Uterus (tissue), 4 donors: ENCODE measurements at regions of chr5 and their contacts with region 1.

Region 1: GRCh38 chr5:157816682-157817386 is 42.1 kb downstream of the CLINT1 start:
- DNase-seq: no peak
- H3K4me3 ChIP-seq: no peak overlapping the region
- H3K27ac ChIP-seq: peak overlapping the region in 1 of 2 donors; percentile 12
- H3K4me1 ChIP-seq: peaks cover 0 to 5% of the 10 kb centered on the region in 2 donors
- H3K27me3 ChIP-seq: no peaks in the 10 kb centered on the region
- CTCF ChIP-seq: peak; percentile 32 to 66 (median 52)
- POLR2A ChIP-seq: no peak

Region 2: DNA sequence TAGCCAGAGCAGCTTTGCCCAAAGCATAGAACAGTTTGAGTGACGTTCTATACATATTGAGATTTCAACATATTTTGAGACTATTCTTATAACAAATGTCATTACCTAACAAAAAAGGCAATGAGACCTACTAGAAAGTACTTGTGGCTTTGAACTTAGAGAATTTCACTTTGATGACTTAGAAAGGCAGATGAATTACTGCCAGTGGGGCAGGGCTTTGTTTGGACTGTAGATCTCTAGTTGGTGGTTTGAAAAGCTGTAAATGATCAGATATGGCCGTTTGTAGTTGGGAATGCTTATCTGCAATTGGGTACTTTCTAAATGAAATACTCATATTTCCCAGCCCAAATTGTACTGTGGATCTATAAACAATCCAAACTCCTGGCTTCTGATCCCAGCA is 192.7 kb before region 1 on chr5:
- intact Hi-C with region 1: no loop called
- DNase-seq: no peak
- H3K4me3 ChIP-seq: no peak overlapping the region
- H3K27ac ChIP-seq: no peak overlapping the region
- H3K4me1 ChIP-seq: no peaks in the 10 kb centered on the region
- H3K27me3 ChIP-seq: no peaks in the 10 kb centered on the region
- CTCF ChIP-seq: no peak
- POLR2A ChIP-seq: no peak

Region 3: GRCh38 chr5:157750320-157750719 is 66.5 kb before region 1 on chr5:
- intact Hi-C with region 1: no loop called
- DNase-seq: peak; percentile 48 to 53
- H3K4me3 ChIP-seq: no peak overlapping the region
- H3K27ac ChIP-seq: peak overlapping the region; percentile 74 to 85
- H3K4me1 ChIP-seq: peaks cover 0 to 14% of the 10 kb centered on the region in 2 donors
- H3K27me3 ChIP-seq: no peaks in the 10 kb centered on the region
- CTCF ChIP-seq: no peak
- POLR2A ChIP-seq: no peak

Region 4: DNA sequence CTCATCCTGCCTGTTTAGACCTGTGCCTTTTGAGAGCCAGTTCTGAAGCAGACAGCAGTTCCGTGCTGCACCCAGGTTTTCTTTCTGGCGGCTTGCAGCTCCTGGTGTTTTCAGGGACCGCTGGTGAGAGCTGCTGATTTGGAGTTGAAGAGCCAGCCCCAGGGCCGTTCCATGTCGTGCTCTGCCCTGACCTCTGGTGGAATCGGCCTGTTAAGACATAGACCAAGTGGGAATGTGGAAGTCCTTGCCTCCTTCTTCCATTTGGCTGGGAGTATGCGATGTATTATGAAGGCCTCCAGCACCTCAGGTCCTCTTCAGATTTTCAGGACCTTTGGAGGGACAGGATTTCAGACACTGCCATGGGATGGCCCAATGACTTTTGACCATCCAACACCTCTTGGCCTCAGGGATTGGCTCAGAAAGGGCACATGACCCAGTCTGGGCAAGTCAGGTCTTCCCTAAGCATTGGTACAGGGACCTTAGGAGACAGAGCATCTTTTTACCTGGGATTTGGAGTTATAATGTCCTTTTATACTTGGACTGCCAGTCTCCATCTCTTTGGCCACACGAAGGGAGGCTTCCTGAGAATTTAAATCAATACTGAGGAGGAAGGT is 178.2 kb after region 1 on chr5:
- intact Hi-C with region 1: loop called (anchors 10 kb)
- DNase-seq: peak; percentile 66 to 73
- H3K4me3 ChIP-seq: no peak overlapping the region
- H3K27ac ChIP-seq: no peak overlapping the region
- H3K4me1 ChIP-seq: no peaks in the 10 kb centered on the region
- H3K27me3 ChIP-seq: no peaks in the 10 kb centered on the region
- CTCF ChIP-seq: peak; percentile 66 to 77 (median 70)
- POLR2A ChIP-seq: no peak